MCF 10A (cell line): ENCODE measurements at regions of chr1 and their contacts with region 1.

Region 1: DNA sequence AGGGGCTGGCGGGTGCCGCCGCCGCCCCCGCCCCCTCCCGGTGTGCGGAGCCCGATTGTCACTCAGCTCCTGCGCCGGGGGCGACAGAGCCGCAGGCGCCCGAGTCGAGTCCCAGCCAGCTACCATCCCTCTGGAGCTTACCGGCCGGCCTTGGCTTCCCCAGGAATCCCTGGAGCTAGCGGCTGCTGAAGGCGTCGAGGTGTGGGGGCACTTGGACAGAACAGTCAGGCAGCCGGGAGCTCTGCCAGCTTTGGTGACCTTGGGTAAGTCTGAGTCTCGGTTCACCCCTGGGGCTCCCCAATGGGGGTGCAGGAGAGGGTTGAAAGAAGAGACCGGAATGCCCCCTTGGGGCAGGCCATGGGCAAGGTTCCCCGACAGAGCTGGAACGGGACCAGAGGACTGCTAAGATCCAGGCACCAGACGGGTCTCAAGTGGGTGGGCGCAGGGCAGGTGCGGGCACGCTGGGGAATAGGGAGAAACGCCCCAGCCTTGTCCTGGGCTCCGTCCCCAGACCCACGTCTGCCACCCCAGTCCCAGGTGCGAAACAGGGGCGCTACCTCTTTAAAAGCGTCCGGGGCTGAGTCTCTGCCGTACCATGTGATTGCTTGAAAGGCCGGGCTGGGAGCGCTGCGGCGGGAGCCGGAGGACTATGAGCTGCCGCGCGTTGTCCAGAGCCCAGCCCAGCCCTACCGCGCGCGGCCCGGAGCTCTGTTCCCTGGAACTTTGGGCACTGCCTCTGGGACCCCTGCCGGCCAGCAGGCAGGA is at the start of gene ADORA1:
- DNase-seq: peak; percentile 87
- H3K4me3 Mint-ChIP-seq: peak within 1 kb of the TSS; percentile 72
- H3K27ac Mint-ChIP-seq: peak within 1 kb of the TSS; percentile 21
- H3K4me1 Mint-ChIP-seq: peaks cover 18% of the 10 kb centered on the region
- H3K27me3 Mint-ChIP-seq: peaks cover 13% of the 10 kb centered on the region
- CTCF ChIP-seq: no peak
- total RNA-seq, gene ADORA1: 0.26 and 0.34 TPM in 2 replicates

Region 2: DNA sequence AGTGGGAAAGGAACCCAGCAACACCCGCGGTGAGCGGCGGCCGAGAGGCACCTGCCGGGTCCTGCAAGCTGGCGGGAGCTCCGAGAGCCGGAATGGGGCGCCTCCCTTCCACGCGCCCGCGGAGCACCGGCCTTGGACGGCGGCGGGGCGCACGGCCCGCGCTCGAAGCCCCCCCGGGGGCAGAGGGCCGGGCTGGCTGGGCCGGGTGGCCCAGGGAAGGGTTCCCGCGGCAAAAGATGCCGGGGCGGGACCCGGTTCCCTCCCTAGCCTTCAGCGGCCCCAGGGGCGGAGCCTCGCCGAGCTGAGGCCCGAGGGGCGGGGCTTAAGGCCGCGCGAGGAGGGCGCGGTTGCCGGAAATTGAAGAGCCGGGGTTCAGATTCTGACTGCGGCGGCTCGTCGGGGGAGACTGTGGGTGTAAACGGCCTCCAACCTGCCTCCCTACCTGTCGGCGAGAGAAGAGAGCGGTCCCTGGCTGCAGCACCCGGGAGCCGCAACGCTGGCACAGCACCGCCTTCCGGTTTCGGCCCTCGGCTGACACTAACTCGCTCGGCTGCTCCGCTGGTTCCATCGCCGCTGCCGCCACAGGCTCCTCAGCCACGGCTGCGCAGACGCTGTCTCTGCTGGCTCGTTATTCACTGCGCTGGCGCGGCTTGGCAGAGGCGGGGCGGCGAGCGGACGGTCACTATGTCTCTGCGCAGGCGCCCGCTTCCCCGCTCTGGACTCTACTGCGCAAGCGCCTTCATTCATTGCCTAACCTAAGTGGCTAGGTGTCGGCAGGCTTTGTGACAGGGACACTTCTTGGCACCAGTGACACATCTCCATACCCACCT is 239.1 kb before region 1 on chr1 and contains the start of gene RABIF:
- CTCF ChIA-PET with region 1: no interaction called
- POLR2A ChIA-PET with region 1: no interaction called
- intact Hi-C with region 1: no loop called
- DNase-seq: peak; percentile 99
- H3K4me3 Mint-ChIP-seq: peak within 1 kb of the TSS; percentile 97
- H3K27ac Mint-ChIP-seq: peak within 1 kb of the TSS; percentile 88
- H3K4me1 Mint-ChIP-seq: peaks cover 7% of the 10 kb centered on the region
- H3K27me3 Mint-ChIP-seq: no peaks in the 10 kb centered on the region
- CTCF ChIP-seq: no peak
- total RNA-seq, gene RABIF: 11.2 and 13.5 TPM in 2 replicates

Region 3: DNA sequence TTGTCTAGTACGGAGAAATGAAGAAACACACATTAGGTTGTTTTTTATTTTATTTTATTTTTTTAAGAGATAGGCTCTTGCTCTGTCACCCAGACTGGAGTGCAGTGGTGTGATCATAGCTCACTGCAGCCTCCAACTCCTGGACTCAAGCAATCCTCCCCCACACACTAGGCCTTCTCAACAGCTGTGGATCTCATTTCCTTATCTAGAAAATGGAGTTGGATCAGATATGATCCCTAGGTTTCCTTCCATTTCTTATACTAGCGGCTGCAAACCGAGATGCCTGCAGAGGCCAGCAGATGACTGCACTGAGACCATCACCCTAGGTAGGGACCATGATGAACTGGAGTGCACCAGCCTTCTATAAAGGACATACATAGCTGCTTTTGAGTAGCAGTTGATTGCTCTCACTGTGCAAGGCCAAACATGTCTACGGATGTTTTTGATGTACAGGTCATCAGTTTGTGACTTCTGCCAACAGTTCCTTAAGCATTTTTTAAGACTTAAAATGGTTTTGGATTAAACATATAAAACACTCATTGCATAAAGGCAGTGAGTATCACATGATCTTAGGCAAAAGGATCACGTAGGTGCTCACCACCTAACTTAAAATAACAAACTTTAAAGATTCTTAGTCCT is 189.4 kb before region 1 on chr1:
- CTCF ChIA-PET with region 1: no interaction called
- POLR2A ChIA-PET with region 1: no interaction called
- intact Hi-C with region 1: no loop called
- DNase-seq: no peak
- H3K4me3 Mint-ChIP-seq: no peak overlapping the region
- H3K27ac Mint-ChIP-seq: no peak overlapping the region
- H3K4me1 Mint-ChIP-seq: no peaks in the 10 kb centered on the region
- H3K27me3 Mint-ChIP-seq: peaks cover 16% of the 10 kb centered on the region
- CTCF ChIP-seq: no peak

Region 4: DNA sequence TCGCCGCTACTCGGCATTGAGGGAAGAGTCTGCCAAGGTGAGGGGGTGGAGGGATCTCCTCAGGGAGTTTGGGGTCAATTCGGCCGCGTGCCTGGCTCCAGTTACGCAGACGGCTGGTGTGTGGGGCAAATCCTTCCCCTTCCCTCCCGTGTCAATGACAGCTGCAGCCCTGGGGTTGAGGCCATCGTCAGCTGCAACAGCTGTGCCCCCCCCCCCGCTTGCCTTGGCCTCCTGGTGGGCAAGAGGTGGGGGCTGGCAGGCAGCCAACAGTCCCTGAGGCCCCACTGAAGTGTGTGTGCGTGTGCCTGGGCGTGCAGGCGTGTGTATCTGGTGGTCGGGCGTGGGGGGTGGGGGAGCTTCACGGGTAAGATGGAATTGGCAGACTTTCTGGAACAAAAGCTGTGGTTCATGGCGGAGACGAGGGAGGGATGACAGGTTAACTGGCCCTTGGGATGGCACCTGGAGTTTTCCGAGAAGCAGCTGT is 76.0 kb before region 1 on chr1:
- CTCF ChIA-PET with region 1: interaction called, 10 read pairs
- POLR2A ChIA-PET with region 1: no interaction called
- intact Hi-C with region 1: no loop called
- DNase-seq: no peak
- H3K4me3 Mint-ChIP-seq: no peak overlapping the region
- H3K27ac Mint-ChIP-seq: no peak overlapping the region
- H3K4me1 Mint-ChIP-seq: peaks cover 11% of the 10 kb centered on the region
- H3K27me3 Mint-ChIP-seq: peaks cover 5% of the 10 kb centered on the region
- CTCF ChIP-seq: no peak